ENCODE measurements at regions of chr22 and their contacts with region 1.

Region 1: GRCh38 chr22:44329179-44329796 is 16.5 kb upstream of the SHISAL1 start:
- DNase-seq: peak; percentile 27
- ATAC-seq: no peak
- H3K4me3 ChIP-seq: no peak overlapping the region
- H3K27ac ChIP-seq: no peak overlapping the region
- H3K4me1 ChIP-seq: peaks cover 13% of the 10 kb centered on the region; the same call in 1 of the 2 replicates
- H3K27me3 ChIP-seq: peaks cover 16% of the 10 kb centered on the region
- CTCF ChIP-seq: 0 out of 2 replicates have a peak, but pooled peaks have one; percentile 5
- POLR2A ChIP-seq: no peak
- RAD21 ChIP-seq: no peak

Region 2: GRCh38 chr22:44080936-44081861 is 248.1 kb before region 1 on chr22:
- CTCF ChIA-PET with region 1: interaction called, 4 read pairs
- POLR2A ChIA-PET with region 1: no interaction called
- dilution Hi-C with region 1: no loop called
- in situ Hi-C with region 1: no loop called
- intact Hi-C with region 1: loop called (anchors 1 kb)
- DNase-seq: peak; percentile 68
- ATAC-seq: peak; percentile 92
- H3K4me3 ChIP-seq: no peak overlapping the region
- H3K27ac ChIP-seq: no peak overlapping the region
- H3K4me1 ChIP-seq: peaks cover 2% of the 10 kb centered on the region; the same call in 1 of the 2 replicates
- H3K27me3 ChIP-seq: no peaks in the 10 kb centered on the region
- CTCF ChIP-seq: peak; percentile 82
- POLR2A ChIP-seq: no peak
- RAD21 ChIP-seq: peak; percentile 92

Region 3: GRCh38 chr22:44147821-44148574 is 181.3 kb before region 1 on chr22:
- CTCF ChIA-PET with region 1: no interaction called
- POLR2A ChIA-PET with region 1: no interaction called
- dilution Hi-C with region 1: no loop called
- in situ Hi-C with region 1: no loop called
- intact Hi-C with region 1: loop called (anchors 10 kb)
- DNase-seq: peak; percentile 36
- ATAC-seq: peak; percentile 51
- H3K4me3 ChIP-seq: no peak overlapping the region
- H3K27ac ChIP-seq: peak overlapping the region; percentile 30; the same call in 1 of the 2 replicates
- H3K4me1 ChIP-seq: peaks cover 14% of the 10 kb centered on the region
- H3K27me3 ChIP-seq: no peaks in the 10 kb centered on the region
- CTCF ChIP-seq: no peak
- POLR2A ChIP-seq: no peak
- RAD21 ChIP-seq: no peak

Region 4: DNA sequence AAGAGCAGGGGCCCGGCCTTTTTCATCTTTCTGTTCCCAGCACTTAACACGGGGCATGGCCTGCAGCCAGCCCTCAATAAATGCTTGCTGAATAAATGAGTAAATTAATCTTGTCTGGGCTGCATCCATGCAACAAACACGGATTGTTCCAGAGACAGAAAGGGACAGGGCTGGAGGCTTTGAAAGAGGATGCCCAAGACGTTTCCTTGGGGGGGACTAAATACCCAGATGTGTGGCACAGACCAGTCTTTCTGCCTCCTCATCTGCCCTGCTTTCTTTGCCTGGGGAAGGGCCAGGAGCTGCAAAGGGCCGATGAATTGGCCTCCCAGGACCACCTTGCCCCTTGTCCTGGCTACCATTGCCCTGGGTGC is 56.9 kb before region 1 on chr22:
- CTCF ChIA-PET with region 1: no interaction called
- POLR2A ChIA-PET with region 1: no interaction called
- dilution Hi-C with region 1: no loop called
- in situ Hi-C with region 1: no loop called
- intact Hi-C with region 1: no loop called
- DNase-seq: no peak
- ATAC-seq: no peak
- H3K4me3 ChIP-seq: no peak overlapping the region
- H3K27ac ChIP-seq: no peak overlapping the region
- H3K4me1 ChIP-seq: no peaks in the 10 kb centered on the region
- H3K27me3 ChIP-seq: no peaks in the 10 kb centered on the region
- CTCF ChIP-seq: no peak
- POLR2A ChIP-seq: no peak
- RAD21 ChIP-seq: no peak

Measured in IMR-90 (cell line).